IMR-90 (cell line): ENCODE measurements at regions of chr12 and their contacts with region 1.

Region 1: DNA sequence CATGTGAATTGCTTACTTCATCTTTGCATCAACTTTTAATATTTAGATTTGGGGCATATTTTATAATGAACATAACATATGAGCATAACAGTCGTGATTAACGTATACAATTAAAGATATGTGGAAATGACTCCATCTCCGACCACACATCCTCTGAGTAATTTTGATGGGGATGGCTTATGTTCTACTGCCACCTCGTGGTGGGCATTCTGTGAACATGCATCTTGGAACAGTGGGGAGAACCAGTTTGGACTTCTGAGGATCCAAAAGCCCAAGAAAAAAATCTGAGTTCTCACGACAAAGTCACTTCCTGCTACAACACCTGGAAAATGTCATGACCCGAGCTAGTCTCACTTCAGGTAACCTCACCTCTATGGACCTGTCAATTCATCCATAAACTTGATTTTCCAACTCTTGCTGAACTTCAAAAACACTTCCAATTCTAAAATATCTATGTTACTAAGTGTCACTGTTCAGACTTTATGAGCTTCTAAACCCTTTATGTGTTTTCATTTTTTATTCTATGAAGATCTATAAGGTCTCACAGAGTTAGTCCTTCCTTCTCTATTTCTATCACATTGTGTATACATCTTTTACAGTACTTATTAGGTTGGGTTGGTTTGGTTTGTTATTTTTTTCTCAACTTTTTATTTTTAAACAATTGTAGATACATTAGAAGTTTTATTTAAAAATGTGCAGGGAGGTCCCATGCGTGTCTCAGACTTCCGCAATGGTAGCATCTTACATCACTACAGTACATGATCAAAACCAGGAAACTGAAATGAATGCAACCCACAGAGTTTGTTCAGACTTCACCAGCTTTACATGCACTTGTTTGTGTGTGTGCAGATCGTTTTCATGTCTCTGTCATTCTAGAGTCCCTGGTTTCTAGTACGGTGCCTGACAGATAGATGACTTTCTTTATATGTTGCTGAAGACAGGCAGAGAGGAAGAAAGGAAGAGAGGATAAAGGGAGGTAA is 38.2 kb upstream of the STAB2 start:
- DNase-seq: peak; percentile 72
- ATAC-seq: peak; percentile 90
- H3K4me3 ChIP-seq: no peak overlapping the region
- H3K27ac ChIP-seq: no peak overlapping the region
- H3K4me1 ChIP-seq: no peaks in the 10 kb centered on the region
- H3K27me3 ChIP-seq: no peaks in the 10 kb centered on the region; the same call in 1 of the 2 replicates
- CTCF ChIP-seq: peak; percentile 94
- POLR2A ChIP-seq: no peak
- RAD21 ChIP-seq: peak; percentile 95

Region 2: DNA sequence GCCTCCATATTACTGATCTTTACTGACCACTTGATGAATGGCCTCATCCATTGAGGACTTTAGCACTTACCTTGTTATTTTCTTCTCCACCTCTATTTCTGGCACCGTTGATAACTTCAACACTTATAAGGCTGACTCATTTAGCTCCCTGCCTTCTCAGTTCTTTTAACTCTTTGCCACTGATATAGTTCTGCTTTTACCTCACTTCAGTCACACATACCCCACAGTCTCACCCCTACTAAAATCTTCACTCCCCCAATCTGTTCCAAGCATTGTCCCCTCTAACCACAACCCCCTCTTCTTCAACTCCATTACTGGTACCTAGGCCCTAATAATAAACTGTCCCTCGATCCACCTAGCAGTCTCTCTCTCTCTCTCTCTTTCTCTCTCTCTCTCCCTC is 772.9 kb before region 1 on chr12:
- CTCF ChIA-PET with region 1: no interaction called
- POLR2A ChIA-PET with region 1: no interaction called
- dilution Hi-C with region 1: no loop called
- in situ Hi-C with region 1: no loop called
- intact Hi-C with region 1: loop called (anchors 10 kb)
- DNase-seq: no peak
- ATAC-seq: no peak
- H3K4me3 ChIP-seq: no peak overlapping the region
- H3K27ac ChIP-seq: no peak overlapping the region
- H3K4me1 ChIP-seq: no peaks in the 10 kb centered on the region
- H3K27me3 ChIP-seq: no peaks in the 10 kb centered on the region
- CTCF ChIP-seq: no peak
- POLR2A ChIP-seq: no peak
- RAD21 ChIP-seq: no peak

Region 3: DNA sequence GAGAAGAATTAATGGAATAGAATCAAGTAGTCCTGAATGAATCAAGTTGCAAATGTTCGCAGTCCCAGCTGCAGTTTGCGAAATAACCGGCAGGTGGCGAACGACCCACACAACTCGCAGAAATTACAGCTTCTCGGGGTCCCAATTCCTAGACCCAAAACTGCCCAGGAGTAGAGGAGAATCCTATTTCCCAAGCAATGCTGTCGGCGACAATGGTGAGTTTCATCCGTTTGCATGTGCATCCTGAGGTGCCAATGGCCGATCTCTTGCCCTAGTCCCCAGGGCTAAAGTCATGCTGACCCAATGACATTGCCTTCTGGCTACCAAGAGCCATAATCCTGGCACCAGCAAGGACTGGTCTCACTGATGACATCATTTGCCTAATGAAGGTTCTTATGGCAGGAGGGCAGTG is 600.0 kb before region 1 on chr12:
- CTCF ChIA-PET with region 1: interaction called, 38 read pairs
- POLR2A ChIA-PET with region 1: no interaction called
- dilution Hi-C with region 1: no loop called
- in situ Hi-C with region 1: loop called (anchors 5 kb)
- intact Hi-C with region 1: loop called (anchors 1 kb)
- DNase-seq: peak; percentile 37
- ATAC-seq: peak; percentile 61
- H3K4me3 ChIP-seq: no peak overlapping the region
- H3K27ac ChIP-seq: no peak overlapping the region
- H3K4me1 ChIP-seq: no peaks in the 10 kb centered on the region
- H3K27me3 ChIP-seq: peaks cover 12% of the 10 kb centered on the region
- CTCF ChIP-seq: peak; percentile 74
- POLR2A ChIP-seq: no peak
- RAD21 ChIP-seq: peak; percentile 62

Region 4: DNA sequence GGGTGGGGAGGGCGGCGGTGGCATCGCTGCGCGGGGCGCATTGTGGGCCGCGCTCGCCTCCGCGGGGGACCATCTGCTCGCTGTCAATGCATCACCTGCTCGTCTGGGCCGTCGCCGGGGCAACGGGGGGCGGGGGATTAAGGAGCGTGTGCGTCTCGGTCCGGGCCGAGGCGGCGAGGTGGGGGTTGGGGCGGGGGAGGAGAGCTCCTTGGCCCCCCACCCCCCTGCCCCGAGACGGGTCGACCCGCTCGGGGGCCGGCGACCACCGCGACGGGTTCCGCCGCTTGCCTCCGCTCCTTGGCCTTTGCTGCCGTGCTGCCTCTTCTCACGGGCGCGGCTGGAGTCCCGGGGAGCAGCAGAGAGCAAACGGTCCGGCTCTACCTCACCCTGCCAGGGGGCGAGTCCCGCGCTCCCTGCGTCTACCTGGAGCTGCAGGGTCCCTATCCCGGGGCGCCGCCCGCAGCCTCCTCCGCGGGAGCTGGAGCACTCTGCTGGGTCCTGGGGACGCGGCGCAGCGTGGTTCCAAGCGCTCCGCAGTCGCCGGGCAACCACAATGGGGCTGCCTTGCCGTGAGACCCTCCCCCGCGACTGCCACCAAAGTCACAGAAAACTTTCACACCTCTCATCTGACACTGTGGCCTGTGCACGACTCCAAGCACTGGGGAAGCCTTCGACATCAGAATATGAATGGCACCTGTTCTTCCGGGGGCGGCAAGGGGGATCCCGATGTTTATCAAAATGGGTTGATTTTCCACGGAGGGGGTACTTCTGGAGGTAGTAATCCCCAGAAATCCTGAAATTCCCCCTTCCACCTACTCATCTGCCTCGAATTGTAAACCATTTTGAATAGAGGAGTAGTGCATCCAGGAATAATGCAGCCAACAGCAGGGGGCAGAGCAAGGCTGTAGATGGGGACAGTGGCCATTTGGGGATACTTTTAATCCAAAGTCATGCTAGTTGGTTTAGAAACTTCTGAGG is 53.1 kb before region 1 on chr12 and contains the start of gene C12orf42:
- CTCF ChIA-PET with region 1: no interaction called
- POLR2A ChIA-PET with region 1: no interaction called
- dilution Hi-C with region 1: no loop called
- in situ Hi-C with region 1: no loop called
- intact Hi-C with region 1: loop called (anchors 5 kb)
- DNase-seq: no peak
- ATAC-seq: peak; percentile 40; the same call in 1 of the 2 replicates
- H3K4me3 ChIP-seq: no peak within 1 kb of the TSS
- H3K27ac ChIP-seq: no peak within 1 kb of the TSS
- H3K4me1 ChIP-seq: no peaks in the 10 kb centered on the region
- H3K27me3 ChIP-seq: peaks cover 2% of the 10 kb centered on the region
- CTCF ChIP-seq: peak; percentile 39
- POLR2A ChIP-seq: no peak
- RAD21 ChIP-seq: peak; percentile 29
- total RNA-seq, gene C12orf42: not detected in 2 replicates

Region 5: DNA sequence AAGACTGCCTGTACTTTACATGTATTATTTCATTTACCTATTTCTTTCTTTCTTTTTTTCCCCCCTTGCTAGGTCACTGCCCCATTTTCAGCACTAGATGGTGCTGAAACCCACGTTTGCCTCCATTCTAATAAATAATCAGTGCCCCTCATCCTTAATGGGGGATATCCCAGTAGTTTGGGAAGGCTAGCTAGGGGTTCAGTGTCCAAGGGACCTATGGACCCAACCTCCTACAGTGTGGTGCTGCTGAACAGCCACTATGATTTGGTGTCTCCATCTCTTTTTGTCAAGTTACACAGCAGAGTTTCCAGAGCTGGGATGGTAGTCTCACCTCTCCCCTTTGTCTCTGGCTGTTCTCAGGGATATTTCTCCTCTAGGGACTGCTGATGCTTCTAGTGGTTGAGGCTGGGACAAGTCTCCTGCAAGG is 508.9 kb after region 1 on chr12:
- CTCF ChIA-PET with region 1: no interaction called
- POLR2A ChIA-PET with region 1: no interaction called
- dilution Hi-C with region 1: no loop called
- in situ Hi-C with region 1: no loop called
- intact Hi-C with region 1: no loop called
- DNase-seq: peak; percentile 37
- ATAC-seq: peak; percentile 63
- H3K4me3 ChIP-seq: no peak overlapping the region
- H3K27ac ChIP-seq: no peak overlapping the region
- H3K4me1 ChIP-seq: peaks cover 7% of the 10 kb centered on the region
- H3K27me3 ChIP-seq: no peaks in the 10 kb centered on the region
- CTCF ChIP-seq: peak; percentile 81
- POLR2A ChIP-seq: no peak
- RAD21 ChIP-seq: peak; percentile 82